Breast epithelium (tissue), 4 donors: ENCODE measurements at regions of chr7 and their contacts with region 1.

Region 1: GRCh38 chr7:33604056-33604455 is 301.3 kb upstream of the BMPER start:
- DNase-seq: no peak
- H3K4me3 ChIP-seq: no peak overlapping the region
- H3K27ac ChIP-seq: no peak overlapping the region
- H3K4me1 ChIP-seq: no peaks in the 10 kb centered on the region
- H3K27me3 ChIP-seq: no peaks in the 10 kb centered on the region
- CTCF ChIP-seq: no peak
- POLR2A ChIP-seq: no peak

Region 2: GRCh38 chr7:33666531-33666930 is 62.5 kb after region 1 on chr7:
- intact Hi-C with region 1: no loop called
- DNase-seq: no peak
- H3K4me3 ChIP-seq: no peak overlapping the region
- H3K27ac ChIP-seq: no peak overlapping the region
- H3K4me1 ChIP-seq: no peaks in the 10 kb centered on the region
- H3K27me3 ChIP-seq: no peaks in the 10 kb centered on the region
- CTCF ChIP-seq: no peak
- POLR2A ChIP-seq: no peak

Region 3: GRCh38 chr7:34036051-34036945 is 432.2 kb after region 1 on chr7:
- intact Hi-C with region 1: loop called (anchors 5 kb)
- DNase-seq: no peak
- H3K4me3 ChIP-seq: no peak overlapping the region
- H3K27ac ChIP-seq: no peak overlapping the region
- H3K4me1 ChIP-seq: no peaks in the 10 kb centered on the region
- H3K27me3 ChIP-seq: no peaks in the 10 kb centered on the region
- CTCF ChIP-seq: no peak
- POLR2A ChIP-seq: no peak